Activated CD4-positive, alpha-beta T cell treated with anti-CD3 and anti-CD28 coated beads, Interleukin-2, amount 10 ng/mL, durations not matched to agents 24 days and 14 days (primary cell): ENCODE measurements at regions of chr20 and their contacts with region 1.

Region 1: GRCh38 chr20:50509935-50510705 is at the start of gene PTPN1:
- DNase-seq: peak; percentile 100
- H3K4me3 Mint-ChIP-seq: peak within 1 kb of the TSS; percentile 98
- H3K27ac Mint-ChIP-seq: peak within 1 kb of the TSS; percentile 93
- H3K4me1 Mint-ChIP-seq: peaks cover 44% of the 10 kb centered on the region
- H3K27me3 Mint-ChIP-seq: no peaks in the 10 kb centered on the region
- total RNA-seq, gene PTPN1: 61.4 and 62.9 TPM in 2 replicates

Region 2: DNA sequence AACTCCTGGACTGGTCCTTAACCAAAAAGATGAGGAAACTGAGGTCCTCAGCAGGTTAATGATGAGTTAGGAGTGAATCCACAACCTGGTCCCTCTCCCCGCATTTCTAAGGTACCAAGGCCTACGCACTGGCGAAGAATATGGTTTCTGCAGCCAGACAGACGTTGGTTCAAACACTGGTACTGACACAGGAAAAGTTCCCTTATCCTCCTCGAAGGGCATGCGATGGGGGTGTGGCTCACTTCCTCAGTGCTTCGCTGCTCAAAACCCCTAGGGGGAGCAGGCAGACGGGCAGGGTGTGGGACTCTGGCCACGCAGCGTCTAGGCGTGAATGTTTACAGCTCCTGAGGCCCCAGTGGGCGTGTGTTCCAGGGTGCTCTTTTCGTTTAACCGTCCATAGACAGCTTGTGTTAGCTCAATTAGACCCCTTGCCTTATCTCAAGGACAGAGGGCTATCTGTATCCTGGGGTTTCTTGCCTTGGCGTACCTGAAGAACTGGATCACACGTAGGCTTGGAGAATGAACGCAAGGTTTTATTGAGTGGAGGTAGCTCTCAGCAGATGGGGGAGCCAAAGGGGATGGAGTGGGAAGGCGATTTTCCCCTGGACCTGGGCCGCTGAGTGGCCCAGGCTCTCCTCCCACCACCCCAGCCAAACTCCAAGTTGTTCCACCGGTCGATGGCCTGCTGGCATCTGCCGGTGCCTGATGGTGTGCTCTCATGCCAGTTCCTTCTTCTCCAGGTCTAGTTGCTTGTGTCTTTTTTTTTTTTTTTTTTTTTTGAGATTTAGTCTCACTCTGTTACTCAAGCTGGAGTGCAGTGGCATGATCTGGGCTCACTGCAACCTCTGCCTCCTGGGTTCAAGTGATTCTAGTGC is 31.7 kb before region 1 on chr20:
- intact Hi-C with region 1: loop called (anchors 1 kb)
- DNase-seq: peak; percentile 94
- H3K4me3 Mint-ChIP-seq: no peak overlapping the region
- H3K27ac Mint-ChIP-seq: no peak overlapping the region
- H3K4me1 Mint-ChIP-seq: peaks cover 31% of the 10 kb centered on the region
- H3K27me3 Mint-ChIP-seq: no peaks in the 10 kb centered on the region